IMR-90 (cell line): ENCODE measurements at regions of chr21 and their contacts with region 1.

Region 1: DNA sequence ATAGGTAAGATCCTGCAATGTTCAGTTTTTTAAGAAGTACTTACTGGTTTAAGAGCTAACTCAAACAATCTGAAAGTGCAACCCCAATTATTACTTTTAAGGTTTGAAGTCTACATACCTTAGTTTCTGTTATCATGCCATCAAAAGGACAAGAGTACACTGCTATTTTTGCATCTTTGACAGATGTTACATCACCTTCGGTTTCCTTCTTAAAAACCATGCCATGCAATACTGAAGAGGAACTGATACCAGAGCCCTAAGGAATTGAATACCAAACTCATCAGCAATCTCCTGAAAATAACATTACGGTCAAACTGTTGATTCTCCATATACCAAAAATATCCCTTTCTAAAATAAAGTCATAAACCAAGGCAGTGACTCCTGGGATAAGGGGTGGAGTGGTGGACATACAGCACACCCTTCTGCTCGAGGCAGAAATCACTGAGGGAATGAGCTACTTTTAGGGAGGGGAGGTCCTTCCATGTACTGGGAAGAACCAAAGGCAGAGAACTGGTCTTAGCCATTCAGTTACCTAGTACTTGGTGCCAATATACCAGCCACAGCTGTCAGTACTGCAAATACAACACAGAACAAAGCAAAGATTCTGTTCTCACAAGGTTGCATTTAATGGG is 8.5 kb downstream of the CCT8 start:
- DNase-seq: no peak
- ATAC-seq: no peak
- H3K4me3 ChIP-seq: no peak overlapping the region
- H3K27ac ChIP-seq: no peak overlapping the region
- H3K4me1 ChIP-seq: no peaks in the 10 kb centered on the region
- H3K27me3 ChIP-seq: no peaks in the 10 kb centered on the region
- CTCF ChIP-seq: no peak
- POLR2A ChIP-seq: no peak
- RAD21 ChIP-seq: no peak

Region 2: GRCh38 chr21:28099001-28099705 is 965.8 kb before region 1 on chr21:
- CTCF ChIA-PET with region 1: no interaction called
- POLR2A ChIA-PET with region 1: no interaction called
- dilution Hi-C with region 1: no loop called
- in situ Hi-C with region 1: no loop called
- intact Hi-C with region 1: no loop called
- DNase-seq: peak; percentile 10
- ATAC-seq: no peak; the same call in 1 of the 2 replicates
- H3K4me3 ChIP-seq: no peak overlapping the region
- H3K27ac ChIP-seq: no peak overlapping the region
- H3K4me1 ChIP-seq: no peaks in the 10 kb centered on the region
- H3K27me3 ChIP-seq: no peaks in the 10 kb centered on the region
- CTCF ChIP-seq: no peak
- POLR2A ChIP-seq: no peak
- RAD21 ChIP-seq: no peak

Region 3: DNA sequence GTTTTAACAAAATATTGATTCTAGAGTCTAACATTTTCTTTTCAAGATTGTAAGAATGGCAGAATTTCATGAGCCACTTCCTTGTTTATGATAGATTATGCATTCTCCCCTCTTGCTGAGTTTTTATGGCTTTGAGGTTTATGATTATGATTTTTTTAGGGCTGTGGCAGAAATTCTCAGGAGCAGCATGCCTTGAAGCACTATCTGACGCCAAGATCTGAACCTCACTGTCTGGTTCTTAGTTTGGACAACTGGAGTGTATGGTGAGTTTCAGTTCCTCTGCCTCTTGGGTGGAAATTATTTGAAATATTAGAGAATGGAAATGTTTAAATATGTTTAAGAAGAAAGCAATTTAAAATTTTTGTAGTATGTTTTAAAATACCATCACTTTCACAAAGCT is 30.3 kb before region 1 on chr21:
- CTCF ChIA-PET with region 1: interaction called, 3 read pairs
- POLR2A ChIA-PET with region 1: no interaction called
- dilution Hi-C with region 1: no loop called
- in situ Hi-C with region 1: loop called (anchors 5 kb)
- intact Hi-C with region 1: loop called (anchors 5 kb)
- DNase-seq: no peak
- ATAC-seq: no peak
- H3K4me3 ChIP-seq: no peak overlapping the region
- H3K27ac ChIP-seq: no peak overlapping the region
- H3K4me1 ChIP-seq: no peaks in the 10 kb centered on the region
- H3K27me3 ChIP-seq: no peaks in the 10 kb centered on the region
- CTCF ChIP-seq: no peak
- POLR2A ChIP-seq: no peak
- RAD21 ChIP-seq: no peak

Region 4: GRCh38 chr21:29053011-29053553 is 11.9 kb before region 1 on chr21:
- CTCF ChIA-PET with region 1: no interaction called
- POLR2A ChIA-PET with region 1: no interaction called
- dilution Hi-C with region 1: no loop called
- in situ Hi-C with region 1: no loop called
- intact Hi-C with region 1: loop called (anchors 2 kb)
- DNase-seq: no peak
- ATAC-seq: peak; percentile 6; the same call in 1 of the 2 replicates
- H3K4me3 ChIP-seq: no peak overlapping the region
- H3K27ac ChIP-seq: peak overlapping the region; percentile 40; the same call in 1 of the 2 replicates
- H3K4me1 ChIP-seq: peaks cover 8% of the 10 kb centered on the region; the same call in 1 of the 2 replicates
- H3K27me3 ChIP-seq: no peaks in the 10 kb centered on the region
- CTCF ChIP-seq: no peak
- POLR2A ChIP-seq: no peak
- RAD21 ChIP-seq: no peak

Region 5: GRCh38 chr21:29671728-29672127 is 606.8 kb after region 1 on chr21:
- CTCF ChIA-PET with region 1: no interaction called
- POLR2A ChIA-PET with region 1: no interaction called
- dilution Hi-C with region 1: no loop called
- in situ Hi-C with region 1: no loop called
- intact Hi-C with region 1: no loop called
- DNase-seq: no peak
- ATAC-seq: no peak
- H3K4me3 ChIP-seq: no peak overlapping the region
- H3K27ac ChIP-seq: no peak overlapping the region
- H3K4me1 ChIP-seq: no peaks in the 10 kb centered on the region
- H3K27me3 ChIP-seq: no peaks in the 10 kb centered on the region
- CTCF ChIP-seq: no peak
- POLR2A ChIP-seq: no peak
- RAD21 ChIP-seq: no peak